ENCODE measurements at regions of chr4 and their contacts with region 1.

Region 1: GRCh38 chr4:184649026-184649970 is at the starts of genes CASP3 and PRIMPOL:
- H3K4me3 Mint-ChIP-seq: peak within 1 kb of the TSS; percentile 87
- H3K27ac Mint-ChIP-seq: peak within 1 kb of the TSS; percentile 90
- H3K4me1 Mint-ChIP-seq: peaks cover 40% of the 10 kb centered on the region
- H3K27me3 Mint-ChIP-seq: no peaks in the 10 kb centered on the region

Region 2: GRCh38 chr4:184664448-184665210 is 15.3 kb after region 1 on chr4:
- intact Hi-C with region 1: loop called (anchors 2 kb)
- H3K4me3 Mint-ChIP-seq: no peak overlapping the region
- H3K27ac Mint-ChIP-seq: no peak overlapping the region
- H3K4me1 Mint-ChIP-seq: peaks cover 27% of the 10 kb centered on the region
- H3K27me3 Mint-ChIP-seq: no peaks in the 10 kb centered on the region

Region 3: DNA sequence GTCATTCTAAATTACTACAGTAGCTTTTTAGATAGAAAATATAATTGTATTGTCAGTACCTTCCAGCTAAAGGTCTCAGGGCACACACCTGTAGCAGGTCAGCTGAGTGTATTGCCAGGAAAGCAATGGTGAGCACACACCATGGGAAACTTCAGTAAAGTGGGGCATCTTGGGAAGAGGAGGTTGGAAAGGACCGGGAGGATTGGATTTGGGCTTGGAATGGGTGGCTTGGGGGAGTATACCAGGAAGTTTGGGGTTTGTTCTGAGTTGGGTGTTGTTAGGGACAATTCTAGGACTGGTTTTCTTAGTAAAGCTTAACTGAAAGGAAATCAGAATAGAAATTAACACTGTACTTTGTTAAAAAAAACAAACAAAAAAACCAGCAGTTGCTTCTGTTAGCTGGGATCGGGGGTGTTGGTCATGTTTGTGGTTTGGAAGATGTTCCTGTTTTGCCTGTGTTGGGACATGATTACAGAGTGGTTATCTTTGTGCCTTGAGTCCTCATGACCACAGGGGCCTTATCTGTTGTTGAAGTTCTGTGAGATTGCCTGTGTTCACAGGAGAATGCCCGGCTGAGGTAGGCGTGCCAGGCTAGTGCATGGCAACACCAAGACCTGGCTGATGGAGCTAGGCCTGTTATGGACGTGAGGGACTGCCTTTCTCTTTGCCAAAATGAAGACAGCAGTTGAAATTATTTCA is 35.3 kb after region 1 on chr4:
- intact Hi-C with region 1: loop called (anchors 5 kb)
- H3K4me3 Mint-ChIP-seq: peak overlapping the region; percentile 54
- H3K27ac Mint-ChIP-seq: peak overlapping the region; percentile 84
- H3K4me1 Mint-ChIP-seq: peaks cover 31% of the 10 kb centered on the region
- H3K27me3 Mint-ChIP-seq: no peaks in the 10 kb centered on the region

Region 4: GRCh38 chr4:184733654-184734524 is 84.6 kb after region 1 on chr4 and contains the start of gene CENPU:
- intact Hi-C with region 1: loop called (anchors 1 kb)
- H3K4me3 Mint-ChIP-seq: peak within 1 kb of the TSS; percentile 92
- H3K27ac Mint-ChIP-seq: peak within 1 kb of the TSS; percentile 88
- H3K4me1 Mint-ChIP-seq: peaks cover 24% of the 10 kb centered on the region
- H3K27me3 Mint-ChIP-seq: no peaks in the 10 kb centered on the region

Region 5: GRCh38 chr4:185033950-185034349 is 384.7 kb after region 1 on chr4:
- intact Hi-C with region 1: no loop called
- H3K4me3 Mint-ChIP-seq: no peak overlapping the region
- H3K27ac Mint-ChIP-seq: no peak overlapping the region
- H3K4me1 Mint-ChIP-seq: peaks cover 5% of the 10 kb centered on the region
- H3K27me3 Mint-ChIP-seq: peaks cover 35% of the 10 kb centered on the region

Measured in dendritic cell treated with granulocyte-macrophage colony-stimulating factor and Interleukin-4, amounts not matched to agents 40 ng/mL and 50 ng/mL, for 4 days (primary cell).